Calu3 (cell line): ENCODE measurements at regions of chr6 and their contacts with region 1.

Region 1: GRCh38 chr6:98769544-98769943 is 64.8 kb upstream of the POU3F2 start:
- DNase-seq: peak; percentile 64
- H3K4me3 Mint-ChIP-seq: no peak overlapping the region
- H3K27ac Mint-ChIP-seq: no peak overlapping the region
- H3K4me1 Mint-ChIP-seq: peaks cover 5% of the 10 kb centered on the region
- H3K27me3 Mint-ChIP-seq: peaks cover 6% of the 10 kb centered on the region
- CTCF ChIP-seq: no peak

Region 2: GRCh38 chr6:98054453-98054852 is 715.1 kb before region 1 on chr6:
- CTCF ChIA-PET with region 1: no interaction called
- intact Hi-C with region 1: loop called (anchors 10 kb)
- DNase-seq: no peak
- H3K4me3 Mint-ChIP-seq: no peak overlapping the region
- H3K27ac Mint-ChIP-seq: no peak overlapping the region
- H3K4me1 Mint-ChIP-seq: no peaks in the 10 kb centered on the region
- H3K27me3 Mint-ChIP-seq: no peaks in the 10 kb centered on the region
- CTCF ChIP-seq: no peak

Region 3: DNA sequence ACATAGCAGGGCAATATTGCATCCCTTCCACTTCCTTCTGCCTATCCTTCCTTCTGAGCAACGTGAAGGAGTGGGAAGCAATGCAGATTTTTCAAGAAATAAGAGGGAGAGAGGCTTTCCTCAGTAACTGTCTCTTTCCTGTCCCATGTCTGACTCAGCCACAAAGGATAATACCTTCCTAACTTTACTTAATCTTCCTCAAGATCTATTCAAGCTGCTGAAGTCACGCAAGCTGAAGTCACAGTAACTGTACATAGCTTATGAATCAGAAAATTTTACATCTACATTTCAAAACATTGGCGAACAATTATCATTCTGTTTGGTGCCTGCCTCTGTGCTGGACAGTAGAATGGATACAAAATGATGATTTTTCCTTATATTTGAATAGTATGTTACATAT is 21.6 kb before region 1 on chr6:
- CTCF ChIA-PET with region 1: no interaction called
- intact Hi-C with region 1: no loop called
- DNase-seq: no peak
- H3K4me3 Mint-ChIP-seq: no peak overlapping the region
- H3K27ac Mint-ChIP-seq: no peak overlapping the region
- H3K4me1 Mint-ChIP-seq: no peaks in the 10 kb centered on the region
- H3K27me3 Mint-ChIP-seq: peaks cover 13% of the 10 kb centered on the region
- CTCF ChIP-seq: no peak

Region 4: GRCh38 chr6:98797217-98797994 is 27.9 kb after region 1 on chr6:
- CTCF ChIA-PET with region 1: no interaction called
- intact Hi-C with region 1: no loop called
- DNase-seq: no peak
- H3K4me3 Mint-ChIP-seq: no peak overlapping the region
- H3K27ac Mint-ChIP-seq: no peak overlapping the region
- H3K4me1 Mint-ChIP-seq: no peaks in the 10 kb centered on the region
- H3K27me3 Mint-ChIP-seq: no peaks in the 10 kb centered on the region
- CTCF ChIP-seq: no peak

Region 5: DNA sequence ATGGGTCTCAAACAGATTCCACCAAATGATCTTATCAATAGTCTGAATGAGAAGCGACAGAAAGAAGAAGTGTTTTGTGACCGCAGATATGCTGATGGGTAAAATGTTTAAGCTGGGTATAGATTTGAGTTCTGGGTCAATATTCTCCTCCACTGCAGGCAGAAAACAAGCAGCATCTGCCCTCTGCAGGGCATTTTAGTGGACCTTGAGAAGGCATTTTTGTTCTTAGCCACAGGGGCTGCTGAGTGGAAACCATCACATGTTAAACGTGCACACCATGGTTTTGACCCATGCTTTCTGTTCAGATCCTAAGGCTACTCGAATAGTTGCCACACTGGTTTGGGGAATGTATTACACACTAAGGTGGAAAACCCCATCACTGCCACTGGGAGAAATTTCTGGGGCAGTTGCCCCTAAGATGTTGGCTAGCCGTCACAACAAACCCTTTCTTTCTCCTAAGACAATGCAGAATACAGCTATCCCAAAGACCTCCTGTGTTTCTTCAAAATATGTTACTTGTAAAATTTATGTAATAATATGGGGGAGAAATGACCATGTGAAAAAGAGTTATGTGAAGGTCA is 70.3 kb after region 1 on chr6:
- CTCF ChIA-PET with region 1: interaction called, 3 read pairs
- intact Hi-C with region 1: loop called (anchors 1 kb)
- DNase-seq: no peak
- H3K4me3 Mint-ChIP-seq: no peak overlapping the region
- H3K27ac Mint-ChIP-seq: no peak overlapping the region
- H3K4me1 Mint-ChIP-seq: peaks cover 20% of the 10 kb centered on the region
- H3K27me3 Mint-ChIP-seq: peaks cover 92% of the 10 kb centered on the region
- CTCF ChIP-seq: no peak